Kidney (tissue), 22 donors: ENCODE measurements at regions of chr2 and their contacts with region 1.

Region 1: DNA sequence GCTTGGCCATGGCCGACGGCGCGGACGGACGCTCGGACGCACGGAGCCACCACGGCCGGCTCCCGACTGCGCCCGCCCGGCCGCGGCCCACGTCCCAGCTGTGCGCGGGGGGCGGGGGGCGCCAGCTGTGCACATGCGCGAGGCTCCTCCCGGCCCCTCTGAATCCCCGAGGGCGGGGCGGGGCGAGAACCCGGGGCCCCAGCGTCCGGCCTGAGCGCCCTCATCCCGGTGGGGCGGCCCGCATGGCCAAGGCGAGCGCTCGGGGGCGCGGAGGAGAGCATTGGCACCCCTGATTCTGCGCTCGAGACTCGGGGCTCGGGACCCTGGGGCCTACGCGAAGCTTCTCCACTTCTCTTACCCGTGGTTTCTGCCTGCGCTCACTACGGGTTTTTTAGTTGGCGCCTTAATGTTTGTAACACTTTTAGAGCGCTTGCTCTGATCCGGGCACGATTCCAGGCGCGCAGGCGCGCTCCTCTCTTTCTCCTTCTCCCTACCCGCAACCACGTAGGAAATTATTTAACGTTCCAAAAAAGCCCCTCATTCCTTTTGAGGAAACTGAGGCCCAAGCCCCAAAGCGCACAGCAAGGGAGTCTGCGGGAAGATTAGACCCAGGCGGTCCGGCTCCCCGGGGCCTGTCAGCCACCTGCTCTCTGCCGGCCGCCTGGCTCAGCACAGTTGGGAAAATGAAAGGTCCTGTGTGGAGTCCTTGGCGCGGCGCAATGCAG is at the start of gene PXDN:
- DNase-seq: peak; percentile 75 to 91 (median 83)
- H3K4me3 ChIP-seq: peak within 1 kb of the TSS in 2 of 3 donors; percentile 37 to 62
- H3K27ac ChIP-seq: peak within 1 kb of the TSS; percentile 74 to 86
- H3K4me1 ChIP-seq: no peaks in the 10 kb centered on the region
- H3K27me3 ChIP-seq: no peaks in the 10 kb centered on the region
- CTCF ChIP-seq: no peak
- total RNA-seq, gene PXDN: 42.3 TPM

Region 2: DNA sequence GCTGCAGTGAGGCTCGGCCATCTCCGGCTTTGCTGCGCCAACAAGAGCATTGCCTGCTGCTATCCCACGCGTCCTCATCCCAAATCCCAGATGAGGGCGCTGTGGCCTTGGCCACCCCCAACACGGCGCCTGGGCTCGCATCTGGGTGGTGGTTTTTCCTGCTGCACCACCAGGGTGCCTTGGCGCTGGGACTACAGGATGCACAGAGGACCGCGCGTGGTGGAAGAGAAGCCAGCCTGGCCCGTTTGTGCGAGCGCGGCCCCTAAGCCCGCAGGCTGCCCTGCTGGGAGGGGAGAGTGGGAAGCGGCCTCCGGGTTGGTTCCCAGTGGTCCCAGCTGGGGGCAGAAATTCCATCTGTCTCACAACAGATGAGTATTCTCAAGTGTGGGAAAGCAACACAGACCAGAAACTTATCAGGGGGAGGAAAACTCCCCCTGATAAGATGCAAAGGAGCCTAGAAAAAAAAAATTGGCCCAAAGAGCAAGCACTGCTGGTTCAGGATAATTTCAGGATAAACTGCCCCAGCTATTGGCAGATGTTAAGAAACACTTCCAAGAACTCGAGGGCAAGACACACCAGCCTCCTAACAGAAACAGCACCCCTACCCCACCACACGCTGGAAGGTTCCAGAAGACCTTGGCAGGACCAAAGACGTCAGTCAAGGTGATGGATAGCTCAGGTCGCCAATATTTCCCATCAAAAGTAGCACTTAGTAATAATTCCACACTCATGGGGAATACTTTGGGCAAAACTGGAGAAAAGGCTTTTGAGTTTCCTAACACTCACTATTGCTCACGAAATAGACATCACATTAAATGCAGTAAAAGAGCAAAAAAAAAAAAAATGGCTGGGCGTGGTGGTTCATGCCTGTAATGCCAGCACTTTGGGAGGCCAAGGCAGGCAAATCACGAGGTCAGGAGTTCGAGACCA is 152.4 kb before region 1 on chr2:
- intact Hi-C with region 1: loop called (anchors 5 kb)
- DNase-seq: peak; percentile 86 to 93 (median 88)
- H3K4me3 ChIP-seq: no peak overlapping the region
- H3K27ac ChIP-seq: no peak overlapping the region
- H3K4me1 ChIP-seq: peaks cover 0 to 16% (median 0%) of the 10 kb centered on the region in 3 donors
- H3K27me3 ChIP-seq: no peaks in the 10 kb centered on the region
- CTCF ChIP-seq: peak; percentile 63